CD8-positive, alpha-beta T cell (primary cell): ENCODE measurements at regions of chr3 and their contacts with region 1.

Region 1: DNA sequence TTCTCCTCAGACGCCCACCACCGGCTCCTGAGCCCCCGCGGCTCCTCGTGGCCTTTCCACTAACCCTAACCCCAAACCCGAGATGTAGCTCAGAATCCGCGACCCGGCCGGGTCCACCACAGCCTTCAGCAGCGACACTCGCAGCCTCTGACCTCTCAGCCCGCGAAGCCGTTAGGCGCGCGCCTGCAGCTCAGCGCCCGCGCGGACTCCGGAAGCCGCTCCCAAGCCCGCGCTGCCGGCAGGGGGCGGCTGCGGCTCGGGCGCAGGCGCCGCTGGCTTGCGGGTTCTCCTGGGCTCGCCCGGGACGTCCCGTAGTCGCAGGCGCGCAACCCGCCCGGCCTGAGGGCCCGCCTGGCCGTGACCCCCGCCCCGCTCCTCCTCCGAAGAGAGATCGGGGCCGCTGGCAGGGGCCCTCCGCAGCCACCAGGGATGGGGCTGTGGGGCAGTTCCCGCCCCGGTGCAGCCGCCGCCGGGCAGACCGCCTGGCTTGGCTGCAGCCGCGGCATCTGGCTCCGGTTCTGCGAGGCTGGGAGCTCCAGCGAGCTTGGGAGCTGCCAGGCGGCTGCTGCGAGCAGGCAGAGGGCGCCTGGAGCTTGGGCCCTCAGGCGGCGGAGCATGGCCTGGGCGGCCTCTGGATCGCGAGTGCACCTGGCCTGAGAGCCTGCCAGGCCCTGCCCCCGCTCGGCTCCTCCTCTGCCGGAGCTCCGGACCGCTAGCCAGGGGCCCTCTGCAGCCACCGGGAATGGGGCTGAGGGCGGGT is 120.7 kb downstream of the LMLN start:
- DNase-seq: peak; percentile 56 to 89 (median 75)
- ATAC-seq: peak; percentile 92
- H3K4me3 ChIP-seq: peak overlapping the region; percentile 64 to 82
- H3K4me3 Mint-ChIP-seq: peak overlapping the region; percentile 83
- H3K27ac ChIP-seq: no peak overlapping the region
- H3K27ac Mint-ChIP-seq: no peak overlapping the region
- H3K4me1 ChIP-seq: peaks cover 17% of the 10 kb centered on the region
- H3K4me1 Mint-ChIP-seq: peaks cover 3% of the 10 kb centered on the region
- H3K27me3 ChIP-seq: peaks cover 9 to 13% of the 10 kb centered on the region in 2 experiments
- H3K27me3 Mint-ChIP-seq: peaks cover 37% of the 10 kb centered on the region
- CTCF ChIP-seq: peak; percentile 71

Region 2: GRCh38 chr3:197906023-197906849 is 174.5 kb before region 1 on chr3:
- CTCF ChIA-PET with region 1: interaction called, 4 read pairs
- POLR2A ChIA-PET with region 1: no interaction called
- intact Hi-C with region 1: loop called in 1 of 2 experiments (anchors 10 kb)
- DNase-seq: peak; percentile 60 to 85 (median 75)
- ATAC-seq: peak; percentile 77
- H3K4me3 ChIP-seq: no peak overlapping the region
- H3K4me3 Mint-ChIP-seq: no peak overlapping the region
- H3K27ac ChIP-seq: no peak overlapping the region
- H3K27ac Mint-ChIP-seq: no peak overlapping the region
- H3K4me1 ChIP-seq: no peaks in the 10 kb centered on the region
- H3K4me1 Mint-ChIP-seq: peaks cover 8% of the 10 kb centered on the region
- H3K27me3 ChIP-seq: no peaks in the 10 kb centered on the region
- H3K27me3 Mint-ChIP-seq: no peaks in the 10 kb centered on the region
- CTCF ChIP-seq: peak; percentile 93

Region 3: GRCh38 chr3:197959898-197960693 is 120.6 kb before region 1 on chr3 and contains the start of gene LMLN:
- CTCF ChIA-PET with region 1: interaction called, 3 read pairs
- POLR2A ChIA-PET with region 1: no interaction called
- intact Hi-C with region 1: loop called (anchors 2 to 5 kb)
- DNase-seq: peak; percentile 87 to 98 (median 95)
- ATAC-seq: peak; percentile 91
- H3K4me3 ChIP-seq: peak within 1 kb of the TSS; percentile 89 to 90
- H3K4me3 Mint-ChIP-seq: peak within 1 kb of the TSS; percentile 91
- H3K27ac ChIP-seq: peak within 1 kb of the TSS; percentile 82 to 88
- H3K27ac Mint-ChIP-seq: peak within 1 kb of the TSS; percentile 92
- H3K4me1 ChIP-seq: peaks cover 32% of the 10 kb centered on the region
- H3K4me1 Mint-ChIP-seq: peaks cover 55% of the 10 kb centered on the region
- H3K27me3 ChIP-seq: no peaks in the 10 kb centered on the region
- H3K27me3 Mint-ChIP-seq: no peaks in the 10 kb centered on the region
- CTCF ChIP-seq: no peak
- total RNA-seq, gene LMLN: 4.4 to 6.4 TPM

Region 4: DNA sequence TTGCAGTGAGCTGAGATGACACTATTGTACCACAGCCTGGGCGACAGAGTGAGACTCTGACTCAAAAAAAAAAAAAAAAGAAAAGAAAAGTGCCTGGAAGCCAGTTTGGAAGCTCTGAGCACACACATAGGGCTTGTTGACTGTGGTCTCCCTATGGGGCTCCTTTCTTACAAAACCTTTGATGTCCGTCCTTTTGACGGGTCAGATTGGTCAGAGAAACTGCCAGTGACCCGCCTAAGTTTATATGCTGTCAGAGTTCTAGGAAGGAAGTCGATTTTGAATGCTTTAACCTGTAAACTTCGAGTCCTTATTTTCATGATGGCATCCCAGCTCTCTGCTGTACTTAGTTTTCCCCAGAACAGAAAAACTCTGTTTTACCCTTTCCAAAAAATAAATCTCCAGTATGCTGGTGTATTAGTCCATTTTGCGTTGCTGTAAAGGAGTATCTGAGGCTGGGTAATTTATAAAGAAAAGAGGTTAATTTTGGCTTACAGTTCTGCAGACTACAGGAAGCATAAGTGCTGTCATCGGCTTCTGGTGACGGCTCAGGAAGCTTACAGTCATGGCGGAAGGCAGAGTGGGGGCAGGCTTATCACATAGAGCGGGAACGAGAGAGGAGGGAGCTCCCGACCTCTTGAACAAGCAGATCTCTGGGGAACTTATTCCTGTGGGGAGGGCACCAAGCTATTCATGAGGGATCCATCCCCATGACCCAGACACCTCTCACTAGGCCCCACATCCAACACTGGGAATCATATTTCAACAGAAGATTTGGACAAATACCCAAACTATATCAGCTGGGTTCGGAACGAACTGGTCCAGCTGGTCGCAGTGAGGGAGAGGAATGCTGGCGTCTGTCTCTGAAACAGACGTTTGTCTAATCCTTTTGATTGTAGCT is 48.4 kb before region 1 on chr3:
- CTCF ChIA-PET with region 1: no interaction called
- POLR2A ChIA-PET with region 1: no interaction called
- intact Hi-C with region 1: no loop called
- DNase-seq: no peak
- ATAC-seq: no peak
- H3K4me3 ChIP-seq: no peak overlapping the region
- H3K4me3 Mint-ChIP-seq: no peak overlapping the region
- H3K27ac ChIP-seq: no peak overlapping the region
- H3K27ac Mint-ChIP-seq: no peak overlapping the region
- H3K4me1 ChIP-seq: no peaks in the 10 kb centered on the region
- H3K4me1 Mint-ChIP-seq: no peaks in the 10 kb centered on the region
- H3K27me3 ChIP-seq: no peaks in the 10 kb centered on the region
- H3K27me3 Mint-ChIP-seq: no peaks in the 10 kb centered on the region
- CTCF ChIP-seq: no peak